ENCODE measurements at regions of chr14 and their contacts with region 1.

Region 1: DNA sequence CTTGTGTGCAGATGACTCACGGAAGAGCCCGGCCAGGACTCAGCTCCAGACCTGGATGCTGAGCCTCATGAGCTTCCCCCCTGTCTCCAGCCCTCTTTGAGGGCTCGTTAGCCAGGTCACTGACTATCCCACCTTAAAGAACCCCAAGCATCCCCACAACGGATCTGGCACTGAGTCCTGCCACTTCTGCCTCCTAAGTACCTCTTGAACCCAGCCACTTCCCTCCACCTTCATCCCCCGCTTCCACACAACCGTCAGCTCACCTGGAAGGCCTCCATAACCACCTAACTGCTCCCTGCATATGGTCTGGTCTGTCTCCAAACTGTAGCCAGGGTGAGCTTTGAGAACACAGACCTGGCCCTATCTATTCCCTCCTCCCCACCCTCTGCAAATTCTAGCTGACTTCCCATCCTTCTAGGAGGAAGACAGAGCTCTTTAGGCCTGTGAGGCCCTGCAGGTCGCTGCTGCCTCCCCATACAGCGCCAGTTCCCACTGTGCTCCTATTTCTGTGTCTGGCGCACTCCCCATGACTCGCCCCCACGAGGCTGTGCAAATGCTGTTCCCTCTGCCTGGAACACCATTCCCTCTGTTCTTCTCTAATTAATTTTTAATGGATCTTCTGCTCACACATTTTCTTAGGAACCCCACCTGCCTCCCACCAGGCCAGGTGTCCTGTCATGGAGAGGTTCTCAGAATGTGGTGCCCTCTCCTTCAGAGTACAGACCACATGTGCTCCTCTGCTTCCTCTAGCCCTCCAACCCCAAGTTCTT is 3.0 kb upstream of the HSP90AA1 start:
- DNase-seq: no peak

Region 2: GRCh38 chr14:102341566-102341965 is 251.8 kb after region 1 on chr14:
- CTCF ChIA-PET with region 1: interaction called, 10 read pairs
- POLR2A ChIA-PET with region 1: no interaction called
- DNase-seq: no peak

Measured in HEK293T (cell line).